Mammary epithelial cell (primary cell): ENCODE measurements at regions of chr15 and their contacts with region 1.

Region 1: DNA sequence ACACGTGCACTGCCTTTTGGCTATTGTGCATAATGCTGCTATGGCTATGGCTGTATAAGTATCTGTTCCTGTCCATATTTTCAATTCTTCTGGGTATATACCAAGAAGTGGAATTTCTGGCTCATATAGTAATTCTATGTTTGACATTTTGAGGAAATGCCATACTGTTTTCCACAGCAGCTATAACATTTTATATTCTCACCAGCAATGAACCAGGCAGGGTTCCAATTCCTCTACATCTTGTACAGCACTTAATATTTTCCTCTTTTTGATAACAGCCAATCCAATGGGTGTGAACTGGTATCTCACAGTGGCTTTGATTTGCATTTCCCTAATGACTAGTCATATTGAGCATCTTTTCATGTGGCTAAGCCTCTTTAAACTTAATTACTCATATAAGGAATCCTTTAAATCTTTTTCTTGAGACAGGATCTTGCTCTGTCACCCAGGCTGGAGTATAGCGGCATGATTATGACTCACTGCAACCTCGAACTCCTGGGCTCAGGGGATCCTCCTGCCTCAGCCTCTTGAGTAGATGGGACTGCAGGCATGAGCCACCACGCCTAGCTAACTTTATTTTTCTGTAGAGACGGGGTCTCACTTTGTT is 38.1 kb upstream of the IGDCC4 start:
- DNase-seq: peak; percentile 23
- H3K4me3 ChIP-seq: no peak overlapping the region
- H3K27ac ChIP-seq: no peak overlapping the region
- H3K4me1 ChIP-seq: no peaks in the 10 kb centered on the region
- H3K27me3 ChIP-seq: no peaks in the 10 kb centered on the region
- CTCF ChIP-seq: no peak

Region 2: GRCh38 chr15:65494071-65494470 is 33.2 kb after region 1 on chr15:
- CTCF ChIA-PET with region 1: no interaction called
- dilution Hi-C with region 1: no loop called
- in situ Hi-C with region 1: no loop called
- intact Hi-C with region 1: no loop called
- DNase-seq: no peak
- H3K4me3 ChIP-seq: no peak overlapping the region
- H3K27ac ChIP-seq: no peak overlapping the region
- H3K4me1 ChIP-seq: no peaks in the 10 kb centered on the region
- H3K27me3 ChIP-seq: no peaks in the 10 kb centered on the region
- CTCF ChIP-seq: no peak

Region 3: DNA sequence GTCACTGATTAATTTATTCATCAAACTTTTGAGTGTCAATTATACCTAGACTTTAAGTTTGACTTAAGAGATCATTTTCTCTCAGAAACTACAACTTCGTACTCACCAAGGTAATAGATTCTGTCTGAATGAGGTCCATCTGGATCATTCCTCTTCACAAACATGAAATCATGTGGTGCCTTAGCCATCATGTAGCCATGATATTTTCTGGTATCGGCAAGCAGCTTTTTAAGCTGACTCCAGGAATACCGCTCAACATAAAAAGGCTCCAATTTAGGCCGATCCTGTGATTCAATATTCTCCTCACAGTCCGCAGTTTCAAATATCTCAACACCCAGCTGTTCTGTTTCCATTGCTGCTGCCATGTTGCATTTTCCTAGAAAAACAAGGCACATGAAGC is 51.3 kb after region 1 on chr15:
- CTCF ChIA-PET with region 1: no interaction called
- dilution Hi-C with region 1: no loop called
- in situ Hi-C with region 1: no loop called
- intact Hi-C with region 1: loop called (anchors 1 kb)
- DNase-seq: no peak
- H3K4me3 ChIP-seq: no peak overlapping the region
- H3K27ac ChIP-seq: no peak overlapping the region
- H3K4me1 ChIP-seq: peaks cover 10% of the 10 kb centered on the region
- H3K27me3 ChIP-seq: no peaks in the 10 kb centered on the region
- CTCF ChIP-seq: no peak

Region 4: DNA sequence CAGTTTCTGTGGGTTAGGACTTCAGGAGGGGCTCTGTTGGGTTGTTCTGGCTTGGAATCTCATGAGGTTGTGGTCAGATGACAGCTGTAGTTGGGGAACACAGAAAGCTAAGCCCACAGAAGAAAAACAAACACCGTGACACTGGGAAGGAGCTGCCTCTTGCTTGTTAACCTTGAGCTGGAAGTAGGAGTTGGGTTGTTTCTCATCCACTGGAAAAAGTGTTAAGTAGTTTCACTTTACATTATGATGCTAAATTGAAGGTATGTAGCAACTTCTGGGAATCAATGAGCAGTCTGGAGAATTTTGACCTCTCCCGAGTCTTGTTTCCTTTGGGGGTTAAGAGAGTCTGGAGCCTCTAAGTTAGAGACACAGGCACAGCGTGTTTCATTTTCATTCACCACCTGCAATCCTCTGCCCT is 89.8 kb after region 1 on chr15:
- CTCF ChIA-PET with region 1: no interaction called
- dilution Hi-C with region 1: no loop called
- in situ Hi-C with region 1: no loop called
- intact Hi-C with region 1: no loop called
- DNase-seq: peak; percentile 16
- H3K4me3 ChIP-seq: no peak overlapping the region
- H3K27ac ChIP-seq: no peak overlapping the region
- H3K4me1 ChIP-seq: no peaks in the 10 kb centered on the region
- H3K27me3 ChIP-seq: no peaks in the 10 kb centered on the region
- CTCF ChIP-seq: no peak